HEK293 (cell line): ENCODE measurements at regions of chr6 and their contacts with region 1.

Region 1: DNA sequence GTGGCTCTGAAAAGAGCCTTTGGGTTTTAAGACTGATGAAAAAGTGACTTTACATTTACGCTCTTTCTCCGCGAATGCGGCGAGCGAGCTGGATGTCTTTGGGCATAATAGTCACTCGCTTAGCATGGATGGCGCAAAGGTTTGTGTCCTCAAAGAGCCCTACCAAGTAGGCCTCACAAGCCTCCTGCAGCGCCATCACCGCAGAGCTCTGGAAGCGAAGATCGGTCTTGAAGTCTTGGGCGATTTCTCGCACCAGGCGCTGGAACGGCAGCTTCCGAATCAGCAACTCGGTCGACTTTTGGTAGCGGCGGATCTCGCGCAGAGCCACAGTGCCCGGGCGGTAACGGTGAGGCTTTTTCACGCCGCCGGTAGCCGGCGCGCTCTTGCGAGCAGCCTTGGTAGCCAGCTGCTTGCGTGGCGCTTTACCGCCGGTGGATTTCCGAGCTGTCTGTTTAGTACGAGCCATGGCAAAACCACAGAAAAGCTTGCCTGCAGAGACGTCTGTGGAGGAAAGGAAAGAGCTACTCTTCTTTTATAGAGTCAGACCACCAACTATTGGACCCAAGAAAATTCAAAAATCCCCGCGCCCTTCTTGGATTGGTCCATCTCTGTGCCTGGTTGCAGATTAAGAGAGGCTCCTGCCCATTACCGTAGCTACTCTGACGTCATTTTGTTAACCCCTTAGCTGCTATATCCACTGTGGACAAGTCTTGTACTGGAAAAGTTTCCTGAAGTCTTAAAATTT is 55.5 kb upstream of the HFE start:
- H3K4me3 ChIP-seq: peak overlapping the region; percentile 71
- H3K27ac ChIP-seq: peak overlapping the region; percentile 63
- H3K4me1 ChIP-seq: peaks cover 12% of the 10 kb centered on the region
- CTCF ChIP-seq: peak; percentile 85

Region 2: GRCh38 chr6:26045065-26045927 is 13.5 kb after region 1 on chr6:
- CTCF ChIA-PET with region 1: interaction called, 3 read pairs
- POLR2A ChIA-PET with region 1: interaction called, 25 read pairs
- H3K4me3 ChIP-seq: no peak overlapping the region
- H3K27ac ChIP-seq: no peak overlapping the region
- H3K4me1 ChIP-seq: no peaks in the 10 kb centered on the region
- CTCF ChIP-seq: no peak

Region 3: DNA sequence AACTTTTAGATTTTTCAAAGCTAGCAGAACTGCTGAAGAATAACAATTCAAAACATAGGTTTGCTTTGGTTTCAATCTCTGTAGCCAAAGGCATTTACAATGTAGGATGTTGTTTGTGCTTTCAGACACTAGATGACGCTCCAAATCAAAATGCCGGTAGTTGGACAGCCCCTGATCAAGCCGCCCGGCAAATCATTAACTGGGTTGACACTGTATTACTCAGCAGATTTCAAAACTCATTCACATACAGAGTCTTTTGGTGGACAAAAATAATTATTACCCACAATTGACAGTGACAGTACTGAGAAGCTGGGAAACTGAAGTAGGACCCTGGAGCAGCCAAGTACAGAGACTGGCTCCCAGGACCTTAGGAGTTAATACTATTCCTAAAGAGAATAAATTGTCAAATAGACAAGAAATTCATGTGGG is 34.2 kb after region 1 on chr6:
- CTCF ChIA-PET with region 1: interaction called, 63 read pairs
- POLR2A ChIA-PET with region 1: interaction called, 5 read pairs
- H3K4me3 ChIP-seq: no peak overlapping the region
- H3K27ac ChIP-seq: no peak overlapping the region
- H3K4me1 ChIP-seq: no peaks in the 10 kb centered on the region
- CTCF ChIP-seq: peak; percentile 46

Region 4: GRCh38 chr6:26103770-26104456 is 72.1 kb after region 1 on chr6:
- CTCF ChIA-PET with region 1: interaction called, 64 read pairs
- POLR2A ChIA-PET with region 1: interaction called, 51 read pairs
- H3K4me3 ChIP-seq: peak overlapping the region; percentile 49
- H3K27ac ChIP-seq: peak overlapping the region; percentile 4; the same call in 1 of the 2 replicates
- H3K4me1 ChIP-seq: peaks cover 6% of the 10 kb centered on the region; the same call in 1 of the 2 replicates
- CTCF ChIP-seq: peak; percentile 60

Region 5: GRCh38 chr6:26258200-26258977 is 226.6 kb after region 1 on chr6:
- CTCF ChIA-PET with region 1: no interaction called
- POLR2A ChIA-PET with region 1: no interaction called
- H3K4me3 ChIP-seq: no peak overlapping the region
- H3K27ac ChIP-seq: no peak overlapping the region
- H3K4me1 ChIP-seq: no peaks in the 10 kb centered on the region
- CTCF ChIP-seq: no peak